Stomach (tissue), 19 donors: ENCODE measurements at regions of chr10 and their contacts with region 1.

Region 1: GRCh38 chr10:131885391-131886161 is 15.2 kb upstream of the PPP2R2D start:
- DNase-seq: peak; percentile 84 to 92
- H3K4me3 ChIP-seq: no peak overlapping the region
- H3K27ac ChIP-seq: no peak overlapping the region
- H3K4me1 ChIP-seq: peaks cover 6 to 9% (median 8%) of the 10 kb centered on the region in 4 donors
- H3K27me3 ChIP-seq: peaks cover 0 to 38% (median 3%) of the 10 kb centered on the region in 3 donors
- CTCF ChIP-seq: peak in 6 of 7 experiments; percentile 54 to 97 (median 95)
- EP300 ChIP-seq: no peak
- POLR2A ChIP-seq: no peak

Region 2: GRCh38 chr10:132023092-132023811 is 137.7 kb after region 1 on chr10:
- intact Hi-C with region 1: loop called (anchors 5 kb)
- DNase-seq: peak; percentile 85 to 93
- H3K4me3 ChIP-seq: peak overlapping the region; percentile 26 to 43 (median 34)
- H3K27ac ChIP-seq: no peak overlapping the region
- H3K4me1 ChIP-seq: peaks cover 7 to 13% (median 10%) of the 10 kb centered on the region in 4 donors
- H3K27me3 ChIP-seq: peaks cover 0 to 55% (median 35%) of the 10 kb centered on the region in 3 donors
- CTCF ChIP-seq: peak in 5 of 7 experiments; percentile 78 to 91 (median 88)
- EP300 ChIP-seq: no peak
- POLR2A ChIP-seq: no peak